WTC11 (cell line): ENCODE measurements at regions of chr11 and their contacts with region 1.

Region 1: GRCh38 chr11:63023841-63024648 is 8.4 kb upstream of the SLC22A8 start:
- DNase-seq: peak; percentile 91
- ATAC-seq: peak; percentile 60
- H3K4me3 Mint-ChIP-seq: no peak overlapping the region
- H3K27ac Mint-ChIP-seq: no peak overlapping the region
- H3K4me1 Mint-ChIP-seq: peaks cover 16% of the 10 kb centered on the region
- H3K27me3 Mint-ChIP-seq: peaks cover 14% of the 10 kb centered on the region
- CTCF ChIP-seq: peak; percentile 100

Region 2: GRCh38 chr11:62896049-62896448 is 128.0 kb before region 1 on chr11:
- CTCF ChIA-PET with region 1: interaction called, 13 read pairs
- POLR2A ChIA-PET with region 1: no interaction called
- DNase-seq: no peak
- ATAC-seq: no peak
- H3K4me3 Mint-ChIP-seq: no peak overlapping the region
- H3K27ac Mint-ChIP-seq: no peak overlapping the region
- H3K4me1 Mint-ChIP-seq: peaks cover 15% of the 10 kb centered on the region
- H3K27me3 Mint-ChIP-seq: no peaks in the 10 kb centered on the region; the same call in none of the 2 replicates
- CTCF ChIP-seq: no peak

Region 3: GRCh38 chr11:62922658-62923431 is 101.2 kb before region 1 on chr11:
- CTCF ChIA-PET with region 1: interaction called, 34 read pairs
- POLR2A ChIA-PET with region 1: no interaction called
- DNase-seq: peak; percentile 75
- ATAC-seq: peak; percentile 7
- H3K4me3 Mint-ChIP-seq: peak overlapping the region; percentile 65
- H3K27ac Mint-ChIP-seq: no peak overlapping the region
- H3K4me1 Mint-ChIP-seq: peaks cover 38% of the 10 kb centered on the region
- H3K27me3 Mint-ChIP-seq: peaks cover 60% of the 10 kb centered on the region
- CTCF ChIP-seq: peak; percentile 54

Region 4: DNA sequence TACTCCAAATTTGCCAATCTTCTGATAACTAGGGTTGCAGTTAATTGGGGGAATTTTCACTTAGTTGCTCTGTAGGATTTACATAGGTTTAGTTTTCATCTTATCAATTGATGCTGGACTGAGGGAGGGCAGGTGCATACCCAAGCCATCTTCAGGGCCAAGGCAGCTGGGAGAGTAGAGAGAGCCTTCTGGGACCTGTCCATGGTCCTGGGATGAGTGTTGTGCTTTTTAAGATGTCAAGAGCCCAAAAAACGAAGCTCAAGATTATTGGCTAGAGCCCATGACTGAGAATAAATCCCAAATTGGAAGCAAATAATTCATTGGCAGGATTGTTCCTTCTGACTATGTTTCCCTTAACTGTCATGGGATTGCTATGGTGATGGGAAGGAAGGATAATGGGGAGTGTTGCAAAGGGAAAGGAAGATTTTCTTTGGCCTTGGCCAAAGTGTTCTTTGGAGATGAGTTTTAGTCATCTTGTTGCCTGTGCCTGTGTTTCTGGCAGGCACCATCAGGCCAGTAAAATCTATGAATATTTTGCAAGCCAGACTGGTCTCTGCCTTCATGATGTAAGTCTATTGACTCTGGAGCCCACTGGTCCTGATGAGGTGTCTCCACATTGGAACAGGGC is 43.8 kb before region 1 on chr11:
- CTCF ChIA-PET with region 1: interaction called, 155 read pairs
- POLR2A ChIA-PET with region 1: interaction called, 3 read pairs
- DNase-seq: no peak
- ATAC-seq: no peak
- H3K4me3 Mint-ChIP-seq: no peak overlapping the region
- H3K27ac Mint-ChIP-seq: no peak overlapping the region
- H3K4me1 Mint-ChIP-seq: no peaks in the 10 kb centered on the region
- H3K27me3 Mint-ChIP-seq: no peaks in the 10 kb centered on the region
- CTCF ChIP-seq: no peak

Region 5: GRCh38 chr11:62999649-63000048 is 24.4 kb before region 1 on chr11:
- CTCF ChIA-PET with region 1: interaction called, 41 read pairs
- POLR2A ChIA-PET with region 1: no interaction called
- DNase-seq: no peak
- ATAC-seq: peak; percentile 37; the same call in 1 of the 2 replicates
- H3K4me3 Mint-ChIP-seq: no peak overlapping the region
- H3K27ac Mint-ChIP-seq: no peak overlapping the region
- H3K4me1 Mint-ChIP-seq: peaks cover 10% of the 10 kb centered on the region
- H3K27me3 Mint-ChIP-seq: no peaks in the 10 kb centered on the region; the same call in 1 of the 2 replicates
- CTCF ChIP-seq: no peak